ENCODE measurements at regions of chr6 and their contacts with region 1.

Region 1: GRCh38 chr6:96521644-96522464 is at the start of gene UFL1:
- DNase-seq: peak; percentile 89 to 92
- H3K4me3 ChIP-seq: peak within 1 kb of the TSS; percentile 84 to 90 (median 87)
- H3K27ac ChIP-seq: peak within 1 kb of the TSS; percentile 94 to 95
- H3K4me1 ChIP-seq: no peaks in the 10 kb centered on the region
- H3K27me3 ChIP-seq: no peaks in the 10 kb centered on the region
- CTCF ChIP-seq: no peak
- POLR2A ChIP-seq: peak; percentile 76
- total RNA-seq, gene UFL1: 22.6 to 29.9 (median 28.0) TPM

Region 2: GRCh38 chr6:95923518-95923917 is 598.3 kb before region 1 on chr6:
- intact Hi-C with region 1: no loop called
- DNase-seq: no peak
- H3K4me3 ChIP-seq: no peak overlapping the region
- H3K27ac ChIP-seq: no peak overlapping the region
- H3K4me1 ChIP-seq: no peaks in the 10 kb centered on the region
- H3K27me3 ChIP-seq: no peaks in the 10 kb centered on the region
- CTCF ChIP-seq: no peak
- POLR2A ChIP-seq: no peak

Region 3: DNA sequence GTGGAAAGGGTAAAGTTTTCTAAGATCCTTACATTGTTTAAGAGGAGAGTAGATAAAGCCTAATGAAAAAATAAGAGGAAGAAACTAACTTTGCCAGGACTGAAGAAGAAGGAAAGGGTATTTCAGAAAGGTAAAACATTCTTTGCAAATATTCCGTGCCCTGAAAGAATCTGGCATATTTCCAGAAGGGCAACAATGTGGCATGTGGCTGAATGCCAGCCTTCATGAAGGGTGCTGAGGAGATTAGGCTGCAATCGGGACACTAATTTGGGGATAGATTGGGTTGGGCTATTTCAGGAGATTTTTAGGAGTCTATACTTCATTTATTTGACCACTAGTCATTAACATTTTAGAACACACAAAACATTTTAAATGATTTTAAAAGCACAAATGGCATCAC is 16.5 kb before region 1 on chr6:
- intact Hi-C with region 1: no loop called
- DNase-seq: no peak
- H3K4me3 ChIP-seq: no peak overlapping the region
- H3K27ac ChIP-seq: no peak overlapping the region
- H3K4me1 ChIP-seq: no peaks in the 10 kb centered on the region
- H3K27me3 ChIP-seq: no peaks in the 10 kb centered on the region
- CTCF ChIP-seq: no peak
- POLR2A ChIP-seq: no peak

Region 4: DNA sequence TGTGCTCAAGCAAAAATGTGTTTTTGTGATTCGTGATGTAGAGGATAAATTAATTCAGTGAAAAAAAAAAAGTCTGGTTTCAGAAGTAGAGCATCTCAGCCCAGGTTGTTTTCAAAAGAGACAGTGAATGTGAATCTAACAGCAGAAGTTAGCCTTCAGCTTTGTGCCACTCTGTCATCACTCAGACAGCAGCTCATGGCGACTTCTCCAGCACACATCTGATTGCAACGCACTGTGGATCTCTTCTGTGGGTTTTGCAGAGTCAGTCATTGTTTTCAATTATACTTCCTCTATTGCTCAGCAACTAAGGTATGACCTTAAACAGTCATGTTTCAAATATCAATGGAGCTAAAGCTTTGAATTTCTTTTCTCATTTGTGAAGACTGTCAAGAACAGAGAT is 1977.0 kb after region 1 on chr6:
- intact Hi-C with region 1: loop called (anchors 10 kb)
- DNase-seq: no peak
- H3K4me3 ChIP-seq: no peak overlapping the region
- H3K27ac ChIP-seq: no peak overlapping the region
- H3K4me1 ChIP-seq: no peaks in the 10 kb centered on the region
- H3K27me3 ChIP-seq: no peaks in the 10 kb centered on the region
- CTCF ChIP-seq: no peak
- POLR2A ChIP-seq: no peak

Measured in breast epithelium (tissue), 4 donors.